Activated naive CD4-positive, alpha-beta T cell treated with anti-CD3 and anti-CD28 coated beads for 36 hours (primary cell): ENCODE measurements at regions of chr3 and their contacts with region 1.

Region 1: GRCh38 chr3:38164966-38165680 is at the start of gene OXSR1:
- DNase-seq: peak; percentile 99
- H3K4me3 Mint-ChIP-seq: peak within 1 kb of the TSS; percentile 93
- H3K27ac Mint-ChIP-seq: peak within 1 kb of the TSS; percentile 99
- H3K4me1 Mint-ChIP-seq: peaks cover 41% of the 10 kb centered on the region
- H3K27me3 Mint-ChIP-seq: no peaks in the 10 kb centered on the region
- total RNA-seq, gene OXSR1: 33.8 to 35.0 TPM

Region 2: GRCh38 chr3:36993326-36994283 is 1171.5 kb before region 1 on chr3 and contains the start of gene MLH1:
- CTCF ChIA-PET with region 1: no interaction called
- intact Hi-C with region 1: loop called (anchors 1 kb)
- DNase-seq: peak; percentile 100
- H3K4me3 Mint-ChIP-seq: no peak within 1 kb of the TSS
- H3K27ac Mint-ChIP-seq: no peak within 1 kb of the TSS
- H3K4me1 Mint-ChIP-seq: peaks cover 45% of the 10 kb centered on the region
- H3K27me3 Mint-ChIP-seq: no peaks in the 10 kb centered on the region
- total RNA-seq, gene MLH1: 86.6 to 95.3 TPM

Region 3: DNA sequence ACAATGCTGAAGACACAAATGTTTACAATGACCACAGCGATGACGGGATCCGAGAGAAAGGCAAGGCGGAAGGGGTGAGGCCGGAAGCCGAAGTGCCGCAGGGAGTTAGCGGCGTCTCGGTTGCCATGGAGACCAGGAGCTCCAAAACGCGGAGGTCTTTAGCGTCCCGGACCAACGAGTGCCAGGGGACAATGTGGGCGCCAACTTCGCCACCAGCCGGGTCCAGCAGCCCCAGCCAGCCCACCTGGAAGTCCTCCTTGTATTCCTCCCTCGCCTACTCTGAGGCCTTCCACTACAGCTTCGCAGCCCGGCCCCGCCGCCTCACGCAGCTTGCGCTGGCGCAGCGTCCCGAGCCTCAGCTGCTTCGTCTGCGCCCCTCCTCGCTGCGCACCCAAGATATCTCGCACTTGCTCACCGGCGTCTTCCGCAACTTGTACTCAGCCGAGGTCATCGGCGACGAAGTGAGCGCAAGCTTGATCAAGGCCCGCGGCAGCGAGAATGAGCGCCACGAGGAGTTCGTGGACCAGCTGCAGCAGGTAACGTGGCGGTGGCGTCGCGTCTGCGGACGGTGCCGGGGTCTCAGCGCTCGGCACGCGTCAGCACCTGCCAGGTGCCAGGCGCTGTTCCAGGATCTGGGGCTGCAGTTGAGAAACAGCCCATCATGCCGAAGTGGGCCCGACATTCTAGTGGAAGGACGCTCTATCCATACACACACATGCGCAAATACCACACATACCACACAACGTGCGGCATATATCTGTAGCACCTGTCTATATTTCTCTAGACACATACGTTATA is 125.8 kb before region 1 on chr3 and contains the start of gene DLEC1:
- CTCF ChIA-PET with region 1: no interaction called
- intact Hi-C with region 1: loop called (anchors 1 kb)
- DNase-seq: peak; percentile 88
- H3K4me3 Mint-ChIP-seq: peak within 1 kb of the TSS; percentile 66
- H3K27ac Mint-ChIP-seq: peak within 1 kb of the TSS; percentile 88
- H3K4me1 Mint-ChIP-seq: peaks cover 28% of the 10 kb centered on the region
- H3K27me3 Mint-ChIP-seq: peaks cover 4% of the 10 kb centered on the region
- total RNA-seq, gene DLEC1: 0.17 to 0.19 TPM

Region 4: DNA sequence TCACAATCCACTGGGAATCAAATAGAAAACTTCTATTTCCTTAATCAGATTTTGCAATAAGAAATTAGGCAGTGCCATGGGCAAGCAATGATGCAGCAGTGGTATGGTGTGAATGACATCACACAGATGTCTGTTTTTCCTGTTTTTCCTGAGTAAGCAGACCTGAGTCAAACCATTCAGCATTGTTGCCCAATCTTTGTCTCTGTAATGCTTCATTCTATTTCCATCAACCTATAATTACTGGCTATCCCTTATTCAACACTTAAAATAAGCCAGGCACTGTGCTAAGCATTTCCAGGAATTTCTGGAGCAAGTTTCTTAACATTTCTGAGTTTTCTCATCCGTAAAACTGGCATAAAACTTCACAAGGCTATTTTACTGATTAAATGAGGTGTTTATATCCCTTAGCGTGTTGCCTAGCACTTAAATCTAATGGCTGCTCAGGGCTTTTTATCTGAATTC is 11.1 kb before region 1 on chr3:
- CTCF ChIA-PET with region 1: interaction called, 19 read pairs
- intact Hi-C with region 1: loop called (anchors 1 kb)
- DNase-seq: no peak
- H3K4me3 Mint-ChIP-seq: no peak overlapping the region
- H3K27ac Mint-ChIP-seq: no peak overlapping the region
- H3K4me1 Mint-ChIP-seq: peaks cover 35% of the 10 kb centered on the region
- H3K27me3 Mint-ChIP-seq: no peaks in the 10 kb centered on the region

Region 5: GRCh38 chr3:38210141-38210757 is 45.1 kb after region 1 on chr3:
- CTCF ChIA-PET with region 1: no interaction called
- intact Hi-C with region 1: loop called (anchors 2 kb)
- DNase-seq: peak; percentile 25
- H3K4me3 Mint-ChIP-seq: no peak overlapping the region
- H3K27ac Mint-ChIP-seq: peak overlapping the region; percentile 4
- H3K4me1 Mint-ChIP-seq: peaks cover 57% of the 10 kb centered on the region
- H3K27me3 Mint-ChIP-seq: no peaks in the 10 kb centered on the region

Region 6: GRCh38 chr3:38453075-38453912 is 288.2 kb after region 1 on chr3 and contains the start of gene ACVR2B:
- CTCF ChIA-PET with region 1: no interaction called
- intact Hi-C with region 1: loop called (anchors 1 kb)
- DNase-seq: peak; percentile 74
- H3K4me3 Mint-ChIP-seq: peak within 1 kb of the TSS; percentile 96
- H3K27ac Mint-ChIP-seq: peak within 1 kb of the TSS; percentile 74
- H3K4me1 Mint-ChIP-seq: peaks cover 2% of the 10 kb centered on the region
- H3K27me3 Mint-ChIP-seq: no peaks in the 10 kb centered on the region
- total RNA-seq, gene ACVR2B: 6.5 to 6.9 TPM

Region 7: DNA sequence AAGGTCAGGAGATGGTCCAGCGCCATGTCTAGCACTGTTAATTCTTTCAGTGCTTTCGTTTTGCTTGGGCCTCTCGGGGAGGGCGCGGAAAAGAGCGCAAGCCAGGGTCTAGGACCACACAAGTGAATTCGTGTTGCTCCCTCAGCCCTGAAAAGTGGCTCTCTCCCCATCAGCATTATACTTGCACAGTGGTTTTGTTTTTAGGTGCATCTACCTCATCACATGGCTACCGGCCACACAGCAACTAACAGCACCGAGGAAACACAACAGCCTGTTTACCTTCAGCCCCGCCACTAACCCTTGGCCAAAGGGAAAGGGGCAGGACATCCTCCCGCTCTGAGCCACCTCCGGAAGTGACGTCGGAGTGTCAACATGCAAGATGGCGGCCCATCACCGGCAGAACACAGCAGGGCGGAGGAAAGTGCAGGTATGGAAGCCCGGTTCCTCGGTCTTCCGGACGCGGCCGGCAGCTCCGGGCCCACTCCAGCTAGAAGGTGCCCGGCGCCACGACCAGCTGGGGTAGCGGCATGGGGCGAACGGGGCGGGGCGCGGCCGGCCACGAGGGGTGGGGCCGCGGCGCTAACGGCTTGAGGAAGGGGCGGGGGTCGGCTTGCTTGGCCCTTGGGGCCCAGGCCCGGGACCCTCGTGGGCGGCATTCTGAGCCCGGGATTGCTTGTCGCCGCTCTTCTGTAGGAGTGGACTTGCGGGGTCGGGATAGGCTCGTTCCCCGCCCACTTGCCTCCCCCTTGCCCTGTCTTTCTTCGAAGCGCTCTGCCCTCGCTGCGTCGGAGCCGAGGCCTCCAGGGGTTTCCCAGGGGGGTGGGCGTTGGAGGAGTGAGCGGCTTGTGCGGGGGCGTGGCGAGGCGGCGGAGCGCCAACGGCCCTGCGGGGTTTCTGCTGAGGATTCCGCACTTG is 886.8 kb after region 1 on chr3 and contains the starts of genes SCN11A and WDR48:
- CTCF ChIA-PET with region 1: no interaction called
- intact Hi-C with region 1: loop called (anchors 1 kb)
- DNase-seq: peak; percentile 97
- H3K4me3 Mint-ChIP-seq: peak within 1 kb of the TSS; percentile 96
- H3K27ac Mint-ChIP-seq: peak within 1 kb of the TSS; percentile 98
- H3K4me1 Mint-ChIP-seq: peaks cover 50% of the 10 kb centered on the region
- H3K27me3 Mint-ChIP-seq: no peaks in the 10 kb centered on the region
- total RNA-seq, gene SCN11A: 0.05 TPM
- total RNA-seq, gene WDR48: 32.3 to 32.9 TPM